ENCODE measurements at regions of chr11 and their contacts with region 1.

Region 1: DNA sequence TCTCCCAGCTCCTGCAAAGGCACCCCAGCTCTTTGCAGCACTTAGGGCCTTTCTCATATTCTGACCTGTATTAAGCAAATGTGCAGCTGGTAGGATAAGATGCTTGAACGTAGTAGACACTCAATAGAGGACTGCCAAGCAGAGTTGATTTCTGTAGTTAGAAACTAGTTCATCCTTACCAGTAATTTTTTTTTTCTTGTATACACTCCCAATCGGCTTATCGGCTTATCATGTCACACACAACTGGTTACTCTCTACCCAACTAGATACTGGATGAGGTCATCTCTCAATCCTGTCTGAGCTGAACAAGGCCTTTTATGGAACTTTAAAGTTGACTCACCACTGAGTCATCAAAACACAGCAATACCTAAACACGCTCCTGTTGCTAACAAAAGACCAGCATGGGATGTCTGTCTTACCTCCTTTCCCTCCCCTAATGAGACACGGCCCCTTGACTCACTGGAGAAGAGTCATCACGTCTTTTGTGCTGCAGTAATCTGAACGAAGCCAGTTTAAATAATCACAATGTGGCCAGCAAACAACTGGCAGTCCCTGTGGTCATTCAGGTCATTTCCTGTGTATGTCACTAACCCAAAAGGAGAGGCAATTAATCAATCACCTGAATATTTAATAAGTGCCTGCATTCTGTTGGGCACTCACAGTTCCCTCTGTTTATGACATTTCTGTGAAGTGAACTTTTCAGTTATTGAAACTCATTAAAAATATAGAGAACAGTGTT is 7.5 kb upstream of the WEE1 start:
- DNase-seq: peak; percentile 90 to 91
- H3K4me3 ChIP-seq: no peak overlapping the region
- H3K4me3 Mint-ChIP-seq: peak overlapping the region; percentile 57
- H3K27ac Mint-ChIP-seq: peak overlapping the region; percentile 100
- H3K4me1 ChIP-seq: peaks cover 56% of the 10 kb centered on the region
- H3K4me1 Mint-ChIP-seq: peaks cover 54% of the 10 kb centered on the region
- H3K27me3 ChIP-seq: no peaks in the 10 kb centered on the region
- H3K27me3 Mint-ChIP-seq: no peaks in the 10 kb centered on the region
- CTCF ChIP-seq: no peak

Region 2: GRCh38 chr11:9534791-9535781 is 30.9 kb before region 1 on chr11:
- CTCF ChIA-PET with region 1: interaction called, 5 read pairs
- POLR2A ChIA-PET with region 1: interaction called, 4 read pairs
- intact Hi-C with region 1: loop called (anchors 1 kb)
- DNase-seq: peak; percentile 59 to 76
- H3K4me3 ChIP-seq: no peak overlapping the region
- H3K4me3 Mint-ChIP-seq: no peak overlapping the region
- H3K27ac Mint-ChIP-seq: peak overlapping the region; percentile 14
- H3K4me1 ChIP-seq: peaks cover 44% of the 10 kb centered on the region
- H3K4me1 Mint-ChIP-seq: peaks cover 20% of the 10 kb centered on the region
- H3K27me3 ChIP-seq: no peaks in the 10 kb centered on the region
- H3K27me3 Mint-ChIP-seq: no peaks in the 10 kb centered on the region
- CTCF ChIP-seq: peak; percentile 74 to 80

Region 3: DNA sequence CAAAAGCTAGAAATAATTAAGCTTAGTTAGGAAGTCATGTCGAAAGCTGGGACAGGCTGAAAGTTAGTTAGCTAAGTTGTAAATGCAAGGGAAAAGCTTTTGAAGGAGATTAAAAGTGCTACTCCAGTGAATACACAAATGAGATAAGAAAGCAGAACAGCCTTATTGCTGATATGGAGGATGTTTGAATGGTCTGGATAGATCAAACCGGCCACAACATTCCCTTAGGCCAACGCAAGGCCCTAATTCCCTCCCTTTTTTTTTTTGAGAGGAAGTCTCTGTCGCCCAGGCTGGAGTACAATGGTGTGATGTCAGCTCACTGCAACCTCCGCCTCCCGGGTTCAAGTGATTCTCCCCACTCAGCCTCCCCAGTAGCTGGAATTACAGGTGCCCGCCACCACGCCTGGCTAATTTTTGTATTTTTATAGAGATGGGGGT is 15.8 kb before region 1 on chr11:
- CTCF ChIA-PET with region 1: interaction called, 3 read pairs
- POLR2A ChIA-PET with region 1: interaction called, 4 read pairs
- intact Hi-C with region 1: loop called (anchors 2 kb)
- DNase-seq: peak in 1 of 2 experiments; percentile 42
- H3K4me3 ChIP-seq: no peak overlapping the region
- H3K4me3 Mint-ChIP-seq: peak overlapping the region; percentile 48
- H3K27ac Mint-ChIP-seq: peak overlapping the region; percentile 80
- H3K4me1 ChIP-seq: peaks cover 24% of the 10 kb centered on the region
- H3K4me1 Mint-ChIP-seq: peaks cover 17% of the 10 kb centered on the region
- H3K27me3 ChIP-seq: no peaks in the 10 kb centered on the region
- H3K27me3 Mint-ChIP-seq: no peaks in the 10 kb centered on the region
- CTCF ChIP-seq: no peak

Region 4: DNA sequence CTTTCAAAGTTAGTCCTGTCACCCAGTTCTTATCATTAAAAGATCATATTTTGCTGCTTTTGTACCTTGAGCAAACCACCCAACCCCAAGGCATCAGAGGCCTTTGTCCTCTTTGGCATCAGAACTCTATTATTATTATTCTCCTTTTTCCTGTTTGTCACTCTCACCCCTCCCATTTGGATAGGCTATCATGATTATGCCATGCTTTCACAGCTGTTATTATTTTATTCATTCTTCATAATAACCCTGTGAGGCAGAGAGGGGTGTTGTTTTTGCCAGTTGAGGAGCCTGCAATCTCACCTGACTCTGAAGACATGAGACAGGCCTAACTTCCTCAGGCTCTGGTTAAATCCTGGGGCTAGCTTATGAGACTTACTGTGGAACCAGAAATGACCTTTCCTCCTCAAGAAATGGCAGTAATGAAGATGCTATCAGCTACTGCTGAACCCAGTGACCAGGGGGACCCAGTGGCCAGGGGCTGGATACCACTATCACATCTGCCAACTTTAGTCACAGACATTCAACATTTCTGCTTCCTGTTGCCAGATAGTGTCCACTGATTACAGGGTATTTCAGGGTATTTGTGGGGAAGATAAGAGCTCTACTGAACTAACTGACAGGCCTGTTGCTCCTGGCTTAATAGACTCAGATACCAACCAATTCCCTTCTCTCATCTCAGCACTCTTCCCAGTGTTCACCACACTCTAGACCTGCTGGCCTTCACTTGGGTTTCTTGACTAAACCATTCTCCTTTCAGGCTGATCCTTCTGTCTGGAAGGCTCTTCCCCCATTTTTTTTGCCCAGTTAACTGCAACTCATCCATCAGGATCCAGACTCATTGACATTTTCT is 86.1 kb after region 1 on chr11:
- CTCF ChIA-PET with region 1: no interaction called
- POLR2A ChIA-PET with region 1: no interaction called
- intact Hi-C with region 1: no loop called
- DNase-seq: no peak
- H3K4me3 ChIP-seq: no peak overlapping the region
- H3K4me3 Mint-ChIP-seq: no peak overlapping the region
- H3K27ac Mint-ChIP-seq: no peak overlapping the region
- H3K4me1 ChIP-seq: peaks cover 4% of the 10 kb centered on the region; the same call in 1 of the 2 replicates
- H3K4me1 Mint-ChIP-seq: no peaks in the 10 kb centered on the region
- H3K27me3 ChIP-seq: no peaks in the 10 kb centered on the region
- H3K27me3 Mint-ChIP-seq: no peaks in the 10 kb centered on the region
- CTCF ChIP-seq: no peak